A549 (cell line): ENCODE measurements at regions of chr15 and their contacts with region 1.

Region 1: DNA sequence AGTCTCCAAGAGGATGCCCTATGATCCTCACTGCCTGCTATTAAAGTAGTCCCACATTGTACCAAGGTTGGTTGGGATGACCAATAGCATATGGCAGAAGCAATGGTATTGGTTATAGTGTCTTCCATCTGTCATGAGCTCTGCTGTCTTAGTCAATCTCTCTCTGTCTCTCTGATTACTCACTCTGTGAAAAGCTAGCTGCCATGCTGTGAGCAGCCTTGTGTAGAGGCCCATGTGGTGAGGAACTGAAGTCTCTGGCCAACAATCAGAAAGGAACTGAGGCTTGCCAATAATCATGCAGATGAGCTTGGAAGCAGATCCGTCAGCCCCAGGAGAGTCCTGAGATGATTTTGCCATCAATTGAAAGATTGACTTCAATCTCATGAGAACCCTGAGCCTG is 60.3 kb upstream of the CFAP161 start:
- DNase-seq: no peak
- ATAC-seq: no peak
- H3K4me3 ChIP-seq: no peak overlapping the region
- H3K27ac ChIP-seq: no peak overlapping the region
- H3K4me1 ChIP-seq: no peaks in the 10 kb centered on the region
- CTCF ChIP-seq: no peak
- EP300 ChIP-seq: no peak
- POLR2A ChIP-seq: no peak
- RAD21 ChIP-seq: no peak

Region 2: GRCh38 chr15:80789296-80789695 is 284.5 kb before region 1 on chr15:
- CTCF ChIA-PET with region 1: no interaction called
- POLR2A ChIA-PET with region 1: no interaction called
- DNase-seq: no peak
- ATAC-seq: no peak
- H3K4me3 ChIP-seq: no peak overlapping the region
- H3K27ac ChIP-seq: no peak overlapping the region
- H3K4me1 ChIP-seq: no peaks in the 10 kb centered on the region
- CTCF ChIP-seq: no peak
- EP300 ChIP-seq: no peak
- POLR2A ChIP-seq: no peak
- RAD21 ChIP-seq: no peak

Region 3: GRCh38 chr15:80890341-80891005 is 183.3 kb before region 1 on chr15:
- CTCF ChIA-PET with region 1: no interaction called
- POLR2A ChIA-PET with region 1: no interaction called
- DNase-seq: no peak
- ATAC-seq: no peak
- H3K4me3 ChIP-seq: no peak overlapping the region
- H3K27ac ChIP-seq: no peak overlapping the region
- H3K4me1 ChIP-seq: peaks cover 18% of the 10 kb centered on the region
- CTCF ChIP-seq: no peak
- EP300 ChIP-seq: no peak
- POLR2A ChIP-seq: no peak
- RAD21 ChIP-seq: no peak

Region 4: GRCh38 chr15:81085213-81085612 is 11.4 kb after region 1 on chr15:
- CTCF ChIA-PET with region 1: interaction called, 15 read pairs
- POLR2A ChIA-PET with region 1: no interaction called
- DNase-seq: no peak
- ATAC-seq: no peak
- H3K4me3 ChIP-seq: no peak overlapping the region
- H3K27ac ChIP-seq: no peak overlapping the region
- H3K4me1 ChIP-seq: no peaks in the 10 kb centered on the region
- CTCF ChIP-seq: no peak
- EP300 ChIP-seq: no peak
- POLR2A ChIP-seq: no peak
- RAD21 ChIP-seq: no peak